ENCODE measurements at regions of chr15 and their contacts with region 1.

Region 1: GRCh38 chr15:44426975-44427755 is at the start of gene CTDSPL2:
- DNase-seq: peak; percentile 79

Region 2: DNA sequence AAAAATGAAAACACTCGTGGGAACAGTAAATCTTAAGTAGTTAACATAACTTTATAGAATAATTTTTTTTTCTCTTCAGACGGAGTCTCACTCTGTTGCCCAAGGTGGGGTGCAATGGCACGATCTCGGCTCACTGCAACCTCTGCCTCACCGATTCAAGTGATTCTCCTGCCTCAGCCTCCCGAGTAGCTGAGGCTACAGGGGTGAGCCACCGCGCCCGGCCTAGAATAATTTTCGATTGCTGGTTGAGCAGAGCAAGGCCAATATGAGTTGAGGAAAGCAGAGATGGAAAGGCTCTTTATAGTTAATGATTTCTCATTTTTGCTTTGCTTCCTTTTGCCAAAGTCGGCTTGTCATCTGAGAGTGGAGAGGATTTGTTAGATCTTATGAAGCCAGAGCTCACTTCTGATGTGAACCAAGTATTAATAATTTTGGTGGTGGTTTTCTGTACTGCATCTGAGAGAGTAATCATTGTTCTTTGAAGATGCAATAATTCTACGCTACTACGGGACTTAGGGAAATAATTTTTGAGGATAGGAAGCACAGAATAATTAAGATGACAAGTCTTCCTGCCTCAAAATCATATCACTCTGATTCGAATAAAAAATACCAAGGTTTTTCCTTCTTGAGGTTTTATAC is 140.2 kb before region 1 on chr15:
- CTCF ChIA-PET with region 1: interaction called, 5 read pairs
- POLR2A ChIA-PET with region 1: interaction called, 33 read pairs
- DNase-seq: no peak

Region 3: DNA sequence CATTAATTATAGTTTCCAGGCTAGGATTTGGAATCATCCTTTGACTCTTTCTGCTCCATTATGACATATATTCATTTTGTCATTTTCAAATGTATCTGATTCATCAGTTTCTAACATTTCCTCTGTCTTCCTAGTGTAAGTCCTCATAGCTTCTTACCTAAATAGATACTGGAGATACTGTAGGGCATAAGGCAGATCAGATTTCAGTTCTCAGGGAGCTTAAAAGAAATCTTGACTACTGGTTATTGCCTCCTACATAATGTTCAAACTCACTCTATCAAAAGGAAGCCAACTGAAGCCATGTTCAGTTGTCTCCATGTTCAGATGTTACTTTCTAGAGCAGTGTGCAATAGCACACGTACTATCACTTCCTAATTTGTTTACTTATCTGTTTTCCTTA is 29.3 kb before region 1 on chr15:
- CTCF ChIA-PET with region 1: no interaction called
- POLR2A ChIA-PET with region 1: interaction called, 13 read pairs
- DNase-seq: no peak

Region 4: DNA sequence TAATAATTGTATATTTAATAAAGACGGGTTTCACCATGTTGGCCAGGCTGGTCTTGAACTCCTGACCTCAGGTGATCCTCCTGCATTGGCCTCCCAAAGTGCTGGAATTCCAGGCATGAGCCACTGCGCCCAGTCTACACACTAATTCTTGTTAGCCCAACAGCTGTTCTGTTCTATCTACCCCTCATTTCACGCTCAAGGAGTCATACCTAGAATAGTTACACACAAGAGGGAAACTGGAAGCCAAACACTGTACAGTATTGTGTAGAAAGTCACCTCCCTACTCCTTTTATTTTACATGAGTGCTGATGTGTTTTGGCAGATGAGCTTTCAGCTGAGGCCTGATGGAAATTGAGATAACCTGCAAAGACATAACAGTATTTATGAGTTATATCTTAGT is 13.2 kb before region 1 on chr15:
- CTCF ChIA-PET with region 1: no interaction called
- POLR2A ChIA-PET with region 1: interaction called, 12 read pairs
- DNase-seq: no peak

Region 5: GRCh38 chr15:44536962-44537734 is 110.0 kb after region 1 on chr15 and contains the start of gene EIF3J:
- CTCF ChIA-PET with region 1: no interaction called
- POLR2A ChIA-PET with region 1: interaction called, 15 read pairs
- DNase-seq: peak; percentile 87

Region 6: DNA sequence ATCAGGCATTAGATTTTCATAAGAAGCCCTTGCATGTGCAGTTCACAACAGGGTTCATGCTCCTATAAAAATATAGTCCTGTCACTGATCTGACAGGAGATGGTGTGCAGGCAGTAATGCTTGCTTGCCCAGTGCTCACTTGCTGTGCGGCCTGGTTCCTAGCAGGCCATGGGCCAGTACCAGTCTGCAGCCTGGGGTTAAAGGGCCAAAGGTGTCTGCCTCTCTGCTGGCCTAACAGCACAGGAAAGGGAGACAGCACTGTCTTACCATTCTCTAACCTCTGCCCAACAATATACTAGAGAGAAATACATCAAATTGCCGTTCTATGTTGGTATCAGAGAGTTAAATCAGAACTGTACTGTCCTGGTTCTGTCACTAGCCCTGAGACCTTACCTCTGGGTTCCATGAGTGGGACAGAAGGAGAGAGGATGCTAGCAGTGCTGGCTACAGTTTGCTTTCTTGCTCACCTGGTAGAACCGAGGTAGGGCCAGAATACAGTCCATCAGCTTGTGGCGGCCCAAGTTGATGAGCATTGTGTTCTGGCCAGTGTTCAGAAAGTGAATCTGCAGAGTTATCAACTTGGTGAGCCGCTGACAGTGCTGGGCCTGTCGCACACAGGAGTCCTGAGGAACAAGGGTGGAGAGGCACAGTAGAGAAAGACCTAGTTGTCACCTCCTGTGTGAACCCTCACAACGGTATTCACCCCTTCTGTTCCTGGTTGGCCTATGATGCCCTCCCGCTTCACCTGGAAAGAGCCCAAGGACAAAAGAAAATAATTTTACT is 138.4 kb after region 1 on chr15:
- CTCF ChIA-PET with region 1: no interaction called
- POLR2A ChIA-PET with region 1: no interaction called
- DNase-seq: no peak

Region 7: DNA sequence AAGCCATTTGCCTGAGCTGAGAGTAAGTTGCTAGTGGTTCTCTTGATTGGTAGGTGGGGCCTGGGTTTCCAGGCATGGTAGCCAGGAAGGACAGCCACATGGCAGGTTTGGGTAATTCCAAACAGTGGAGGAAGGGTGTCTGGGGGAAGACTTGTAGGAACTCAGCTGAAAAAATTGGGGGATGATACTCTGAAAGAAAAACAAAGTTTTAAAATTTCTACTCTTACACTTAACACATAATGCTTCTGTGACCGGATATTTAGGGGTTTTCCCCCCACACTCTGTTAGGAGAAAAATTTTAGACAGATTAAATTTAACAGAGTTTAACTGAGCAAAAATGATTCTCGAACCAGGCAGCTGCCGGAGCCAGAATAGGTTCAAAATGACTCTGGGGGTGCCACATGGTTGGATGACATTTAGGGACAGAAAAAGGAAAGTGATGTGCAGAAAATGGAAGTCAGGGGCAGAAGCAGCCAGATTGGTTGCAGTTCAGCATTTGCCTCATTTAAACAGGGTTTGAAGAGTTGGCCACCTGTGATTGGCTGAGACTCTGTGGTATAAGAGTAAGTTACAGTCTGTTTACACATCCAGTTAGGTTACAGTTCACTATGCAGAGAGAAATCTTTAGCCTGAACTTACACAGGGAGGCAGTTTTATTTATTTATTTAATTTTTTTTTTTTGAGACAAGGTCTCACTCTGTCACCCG is 292.3 kb after region 1 on chr15:
- CTCF ChIA-PET with region 1: no interaction called
- POLR2A ChIA-PET with region 1: no interaction called
- DNase-seq: no peak

Measured in HEK293T (cell line).